Activated B cell treated with CpG ODN at 0.5 μM for 24 hours (primary cell): ENCODE measurements at regions of chr12 and their contacts with region 1.

Region 1: DNA sequence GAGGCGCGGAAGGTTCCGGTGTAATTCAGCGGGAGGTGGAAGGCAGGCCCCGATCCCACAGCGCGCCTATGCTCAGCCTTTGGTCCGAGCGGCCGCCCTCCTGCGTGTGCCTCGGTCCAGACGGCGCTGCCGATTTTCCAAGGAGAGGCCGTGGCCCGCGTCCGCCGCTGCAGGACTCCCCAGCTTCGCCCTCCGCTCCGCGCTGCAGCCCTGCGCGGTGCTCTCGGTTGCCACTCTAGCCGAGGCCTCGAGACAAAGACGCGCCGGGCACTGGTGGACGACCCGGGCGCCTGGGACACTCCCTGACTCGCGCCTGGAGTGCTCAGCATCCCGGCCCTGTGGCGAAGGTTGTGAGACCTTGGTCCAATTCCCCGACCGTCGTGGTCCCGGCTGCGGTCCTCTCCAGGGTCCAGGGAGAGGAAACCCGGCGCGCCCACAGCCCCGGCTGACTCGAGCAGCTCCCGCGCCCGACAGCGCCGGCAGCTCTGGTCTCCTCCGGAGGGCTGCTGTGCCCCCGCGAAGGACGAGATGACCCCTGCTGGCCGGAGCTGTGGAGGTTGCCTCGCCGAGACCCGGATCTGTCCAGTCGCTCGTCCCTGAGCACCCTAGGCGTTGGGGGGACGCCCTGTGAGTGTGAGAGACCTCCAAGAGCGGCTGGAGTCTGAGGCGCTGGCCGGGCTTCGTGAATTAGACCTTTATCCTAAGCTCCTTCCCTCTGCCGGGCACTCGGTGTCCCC is 6.5 kb downstream of the HOXC12 start:
- DNase-seq: no peak
- ATAC-seq: no peak
- H3K4me3 Mint-ChIP-seq: no peak overlapping the region
- H3K27ac Mint-ChIP-seq: no peak overlapping the region
- H3K4me1 Mint-ChIP-seq: peaks cover 26% of the 10 kb centered on the region
- H3K27me3 Mint-ChIP-seq: peaks cover 80% of the 10 kb centered on the region
- CTCF ChIP-seq: no peak

Region 2: GRCh38 chr12:53427905-53428594 is 533.1 kb before region 1 on chr12:
- CTCF ChIA-PET with region 1: no interaction called
- POLR2A ChIA-PET with region 1: no interaction called
- intact Hi-C with region 1: no loop called
- DNase-seq: no peak
- ATAC-seq: peak; percentile 57
- H3K4me3 Mint-ChIP-seq: no peak overlapping the region
- H3K27ac Mint-ChIP-seq: no peak overlapping the region
- H3K4me1 Mint-ChIP-seq: no peaks in the 10 kb centered on the region
- H3K27me3 Mint-ChIP-seq: no peaks in the 10 kb centered on the region
- CTCF ChIP-seq: no peak

Region 3: GRCh38 chr12:53696285-53696654 is 264.9 kb before region 1 on chr12:
- CTCF ChIA-PET with region 1: no interaction called
- POLR2A ChIA-PET with region 1: no interaction called
- intact Hi-C with region 1: loop called (anchors 10 kb)
- DNase-seq: no peak
- ATAC-seq: peak; percentile 38
- H3K4me3 Mint-ChIP-seq: peak overlapping the region; percentile 66
- H3K27ac Mint-ChIP-seq: no peak overlapping the region
- H3K4me1 Mint-ChIP-seq: peaks cover 29% of the 10 kb centered on the region
- H3K27me3 Mint-ChIP-seq: peaks cover 69% of the 10 kb centered on the region
- CTCF ChIP-seq: no peak

Region 4: GRCh38 chr12:53869500-53869899 is 91.7 kb before region 1 on chr12:
- CTCF ChIA-PET with region 1: no interaction called
- POLR2A ChIA-PET with region 1: no interaction called
- intact Hi-C with region 1: no loop called
- DNase-seq: no peak
- ATAC-seq: no peak
- H3K4me3 Mint-ChIP-seq: no peak overlapping the region
- H3K27ac Mint-ChIP-seq: no peak overlapping the region
- H3K4me1 Mint-ChIP-seq: no peaks in the 10 kb centered on the region
- H3K27me3 Mint-ChIP-seq: peaks cover 4% of the 10 kb centered on the region
- CTCF ChIP-seq: no peak

Region 5: GRCh38 chr12:53974084-53975063 is 13.2 kb after region 1 on chr12 and contains the start of gene HOTAIR:
- CTCF ChIA-PET with region 1: no interaction called
- POLR2A ChIA-PET with region 1: no interaction called
- intact Hi-C with region 1: loop called (anchors 2 kb)
- DNase-seq: no peak
- ATAC-seq: peak; percentile 45
- H3K4me3 Mint-ChIP-seq: peak within 1 kb of the TSS; percentile 66
- H3K27ac Mint-ChIP-seq: peak within 1 kb of the TSS; percentile 50
- H3K4me1 Mint-ChIP-seq: peaks cover 15% of the 10 kb centered on the region
- H3K27me3 Mint-ChIP-seq: peaks cover 71% of the 10 kb centered on the region
- CTCF ChIP-seq: no peak
- total RNA-seq, gene HOTAIR: not detected in 2 replicates

Region 6: DNA sequence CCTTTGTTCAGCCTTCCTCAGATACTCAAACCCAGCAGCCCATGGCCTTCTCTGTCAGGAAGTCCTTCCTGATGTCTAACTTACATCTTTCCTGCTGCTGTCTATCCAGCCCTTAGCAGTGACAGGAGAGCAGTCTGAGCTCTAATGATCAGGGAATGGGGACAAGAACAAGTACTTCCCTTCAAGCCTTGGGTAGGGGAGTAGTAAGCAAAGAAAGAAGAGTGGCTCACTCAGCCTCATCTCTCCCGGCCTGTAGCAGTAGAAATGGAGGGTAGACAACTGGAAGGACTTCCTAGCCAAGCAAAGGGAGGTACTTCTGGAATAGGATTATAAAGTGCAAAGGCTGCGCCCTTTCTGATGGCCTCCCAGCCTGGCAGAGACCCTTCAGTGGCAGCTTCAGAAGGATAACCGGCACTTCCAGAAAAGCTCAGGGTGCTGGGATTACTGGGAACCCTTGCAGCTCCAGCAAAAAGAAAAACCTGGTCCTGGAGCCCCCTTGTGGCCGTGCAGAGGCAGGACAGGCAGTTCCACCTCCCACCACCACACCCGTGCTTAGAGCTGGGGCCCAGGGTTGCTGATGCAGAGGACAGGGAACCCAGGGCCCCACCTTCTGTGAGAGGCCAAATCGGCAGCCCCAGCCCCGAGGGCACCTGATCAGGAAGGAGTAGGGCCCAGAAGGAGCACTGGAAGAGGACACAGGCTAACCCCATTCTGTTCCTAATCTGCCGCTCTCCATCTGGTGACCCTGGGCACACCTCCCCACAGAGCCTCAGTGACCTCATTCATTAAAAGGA is 240.0 kb after region 1 on chr12:
- CTCF ChIA-PET with region 1: no interaction called
- POLR2A ChIA-PET with region 1: interaction called, 15 read pairs
- intact Hi-C with region 1: no loop called
- DNase-seq: peak; percentile 58
- ATAC-seq: peak; percentile 90
- H3K4me3 Mint-ChIP-seq: no peak overlapping the region
- H3K27ac Mint-ChIP-seq: no peak overlapping the region
- H3K4me1 Mint-ChIP-seq: peaks cover 21% of the 10 kb centered on the region
- H3K27me3 Mint-ChIP-seq: peaks cover 53% of the 10 kb centered on the region
- CTCF ChIP-seq: no peak